Motor neuron (in vitro differentiated cells): ENCODE measurements at regions of chr7 and their contacts with region 1.

Region 1: GRCh38 chr7:116258734-116259133 is 48.4 kb downstream of the TES start:
- ATAC-seq: peak in 2 of 8 experiments; percentile 31 to 55
- H3K4me3 ChIP-seq: no peak overlapping the region
- H3K27ac ChIP-seq: no peak overlapping the region
- H3K4me1 ChIP-seq: no peaks in the 10 kb centered on the region

Region 2: DNA sequence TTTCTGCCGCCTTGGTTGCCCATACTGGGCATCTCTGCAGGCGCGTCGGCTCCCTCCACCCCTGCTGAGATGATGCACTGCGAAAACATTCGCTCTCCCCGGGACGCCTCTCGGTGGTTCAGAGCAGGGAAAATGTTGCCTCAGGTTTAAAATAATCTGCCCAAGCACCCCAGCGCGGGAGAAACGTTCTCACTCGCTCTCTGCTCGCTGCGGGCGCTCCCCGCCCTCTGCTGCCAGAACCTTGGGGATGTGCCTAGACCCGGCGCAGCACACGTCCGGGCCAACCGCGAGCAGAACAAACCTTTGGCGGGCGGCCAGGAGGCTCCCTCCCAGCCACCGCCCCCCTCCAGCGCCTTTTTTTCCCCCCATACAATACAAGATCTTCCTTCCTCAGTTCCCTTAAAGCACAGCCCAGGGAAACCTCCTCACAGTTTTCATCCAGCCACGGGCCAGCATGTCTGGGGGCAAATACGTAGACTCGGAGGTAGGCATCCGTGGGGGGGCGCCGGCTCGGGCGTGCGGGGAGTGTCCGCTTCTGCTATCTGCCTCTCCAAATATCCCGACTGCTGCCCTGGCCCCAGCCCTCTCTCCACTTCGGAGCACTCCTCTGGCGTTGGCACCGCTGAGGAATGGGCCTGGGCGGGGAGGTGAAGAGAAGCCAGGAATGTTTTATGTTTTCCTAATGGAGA is 266.0 kb after region 1 on chr7 and contains the start of gene CAV1:
- in situ Hi-C with region 1: loop called in 3 of 9 experiments (anchors 25 kb)
- ATAC-seq: peak; percentile 48 to 64 (median 59)
- H3K4me3 ChIP-seq: peak within 1 kb of the TSS; percentile 43 to 50 (median 45)
- H3K27ac ChIP-seq: no peak within 1 kb of the TSS
- H3K4me1 ChIP-seq: peaks cover 2 to 6% of the 10 kb centered on the region in 2 donors
- total RNA-seq, gene CAV1: 1.9 to 113 (median 9.0) TPM

Region 3: GRCh38 chr7:116588641-116589594 is 330.2 kb after region 1 on chr7:
- in situ Hi-C with region 1: loop called in 8 of 9 experiments (anchors 10 to 25 kb)
- ATAC-seq: peak; percentile 31 to 82 (median 53)
- H3K4me3 ChIP-seq: no peak overlapping the region
- H3K27ac ChIP-seq: no peak overlapping the region
- H3K4me1 ChIP-seq: peaks cover 5 to 9% of the 10 kb centered on the region in 2 donors